CD4-positive, alpha-beta T cell (primary cell): ENCODE measurements at regions of chr1 and their contacts with region 1.

Region 1: GRCh38 chr1:62841587-62842169 is 57.7 kb downstream of the ATG4C start:
- DNase-seq: peak in 4 of 14 experiments; percentile 29 to 73 (median 64)
- ATAC-seq: peak; percentile 60
- H3K4me3 ChIP-seq: no peak overlapping the region
- H3K4me3 Mint-ChIP-seq: no peak overlapping the region
- H3K27ac ChIP-seq: no peak overlapping the region
- H3K27ac Mint-ChIP-seq: no peak overlapping the region
- H3K4me1 ChIP-seq: no peaks in the 10 kb centered on the region
- H3K4me1 Mint-ChIP-seq: no peaks in the 10 kb centered on the region
- H3K27me3 ChIP-seq: no peaks in the 10 kb centered on the region
- H3K27me3 Mint-ChIP-seq: no peaks in the 10 kb centered on the region
- CTCF ChIP-seq: peak; percentile 90

Region 2: DNA sequence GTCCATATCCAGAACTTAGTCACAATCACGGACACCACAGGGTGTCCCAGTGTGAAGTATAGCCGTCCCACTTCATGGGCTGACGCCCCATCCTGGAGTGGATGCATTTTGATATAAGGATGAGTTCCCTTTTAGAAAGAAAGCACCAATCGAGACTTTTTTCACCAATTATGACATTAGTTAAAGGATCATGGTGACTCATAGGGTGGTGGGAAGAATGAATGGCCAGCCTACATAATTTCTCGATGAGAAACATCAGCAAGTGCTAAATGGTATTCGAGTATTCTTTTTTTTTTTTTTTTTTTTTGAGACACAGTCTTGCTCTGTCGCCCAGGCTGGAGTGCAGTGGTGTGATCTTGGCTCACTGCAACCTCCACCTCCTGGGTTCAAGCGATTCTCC is 443.3 kb before region 1 on chr1:
- CTCF ChIA-PET with region 1: no interaction called
- POLR2A ChIA-PET with region 1: no interaction called
- intact Hi-C with region 1: no loop called
- DNase-seq: no peak
- ATAC-seq: no peak
- H3K4me3 ChIP-seq: no peak overlapping the region
- H3K4me3 Mint-ChIP-seq: no peak overlapping the region
- H3K27ac ChIP-seq: no peak overlapping the region
- H3K27ac Mint-ChIP-seq: no peak overlapping the region
- H3K4me1 ChIP-seq: no peaks in the 10 kb centered on the region
- H3K4me1 Mint-ChIP-seq: no peaks in the 10 kb centered on the region
- H3K27me3 ChIP-seq: no peaks in the 10 kb centered on the region
- H3K27me3 Mint-ChIP-seq: no peaks in the 10 kb centered on the region
- CTCF ChIP-seq: no peak

Region 3: DNA sequence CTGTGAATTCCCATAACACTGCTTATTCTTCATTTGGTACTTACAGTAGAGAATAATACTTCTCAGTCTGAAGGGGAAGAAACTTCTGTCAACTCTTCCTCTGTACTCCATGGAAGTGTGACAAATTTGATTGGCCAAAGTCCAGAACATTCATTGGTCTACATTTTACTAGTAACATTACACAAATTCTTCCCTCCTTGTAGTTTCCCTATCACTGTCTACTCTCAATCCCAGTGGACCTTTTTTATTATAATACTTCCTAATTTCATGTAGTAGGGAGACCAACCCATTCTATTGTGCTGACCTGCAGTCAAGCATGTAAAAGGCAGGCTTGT is 600.4 kb after region 1 on chr1:
- CTCF ChIA-PET with region 1: no interaction called
- POLR2A ChIA-PET with region 1: no interaction called
- intact Hi-C with region 1: loop called (anchors 1 to 5 kb)
- DNase-seq: no peak
- ATAC-seq: no peak
- H3K4me3 ChIP-seq: no peak overlapping the region
- H3K4me3 Mint-ChIP-seq: no peak overlapping the region
- H3K27ac ChIP-seq: no peak overlapping the region
- H3K27ac Mint-ChIP-seq: no peak overlapping the region
- H3K4me1 ChIP-seq: no peaks in the 10 kb centered on the region
- H3K4me1 Mint-ChIP-seq: no peaks in the 10 kb centered on the region
- H3K27me3 ChIP-seq: no peaks in the 10 kb centered on the region
- H3K27me3 Mint-ChIP-seq: no peaks in the 10 kb centered on the region
- CTCF ChIP-seq: no peak

Region 4: DNA sequence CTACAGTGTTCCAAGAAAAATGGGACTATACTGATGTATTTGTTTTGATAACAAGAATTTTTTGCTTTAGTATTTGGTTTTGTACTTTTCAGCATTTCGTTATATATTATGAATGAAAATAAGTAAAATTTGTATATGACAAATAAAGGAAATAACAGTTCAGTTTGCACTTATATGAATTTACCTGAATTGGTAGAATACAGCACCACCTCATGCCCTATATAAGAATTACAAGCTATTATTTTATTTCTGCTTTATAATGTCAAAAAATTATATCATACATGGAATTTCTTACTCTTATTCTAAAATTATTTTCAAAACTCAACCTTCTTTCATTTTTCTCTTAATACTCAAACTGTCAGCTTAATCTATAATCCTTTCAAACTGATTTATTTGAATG is 696.3 kb after region 1 on chr1:
- CTCF ChIA-PET with region 1: interaction called, 4 read pairs
- POLR2A ChIA-PET with region 1: no interaction called
- intact Hi-C with region 1: loop called (anchors 1 to 5 kb)
- DNase-seq: peak in 3 of 14 experiments; percentile 17 to 22 (median 17)
- ATAC-seq: no peak
- H3K4me3 ChIP-seq: no peak overlapping the region
- H3K4me3 Mint-ChIP-seq: no peak overlapping the region
- H3K27ac ChIP-seq: no peak overlapping the region
- H3K27ac Mint-ChIP-seq: no peak overlapping the region
- H3K4me1 ChIP-seq: no peaks in the 10 kb centered on the region
- H3K4me1 Mint-ChIP-seq: no peaks in the 10 kb centered on the region
- H3K27me3 ChIP-seq: no peaks in the 10 kb centered on the region
- H3K27me3 Mint-ChIP-seq: no peaks in the 10 kb centered on the region
- CTCF ChIP-seq: peak; percentile 72